ENCODE measurements at regions of chr10 and their contacts with region 1.

Region 1: GRCh38 chr10:63441404-63441803 is 24.4 kb downstream of the JMJD1C start:
- DNase-seq: no peak
- H3K4me3 ChIP-seq: no peak overlapping the region
- H3K27ac ChIP-seq: no peak overlapping the region
- H3K4me1 ChIP-seq: peaks cover 8% of the 10 kb centered on the region
- H3K27me3 ChIP-seq: no peaks in the 10 kb centered on the region
- CTCF ChIP-seq: no peak

Region 2: DNA sequence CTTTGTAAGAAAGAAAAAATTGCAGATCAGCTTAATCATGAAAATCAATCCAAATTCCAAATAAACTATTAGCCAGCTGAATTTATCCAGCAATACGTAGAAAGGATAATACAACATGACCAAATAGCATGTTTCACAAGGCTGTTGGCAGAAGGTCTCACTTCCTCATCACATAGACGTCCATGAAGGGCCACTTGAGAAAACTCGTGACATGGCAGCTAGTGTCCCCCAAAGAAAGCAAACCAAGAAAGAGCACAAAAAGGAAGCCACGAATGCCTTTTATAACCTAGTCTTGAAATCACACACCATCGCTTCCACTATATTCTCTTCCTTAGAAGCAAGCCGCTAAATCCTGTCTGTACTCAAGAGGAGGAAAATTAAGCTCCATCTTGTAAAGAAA is 413.9 kb before region 1 on chr10:
- CTCF ChIA-PET with region 1: no interaction called
- dilution Hi-C with region 1: no loop called
- in situ Hi-C with region 1: no loop called
- intact Hi-C with region 1: no loop called
- DNase-seq: no peak
- H3K4me3 ChIP-seq: no peak overlapping the region
- H3K27ac ChIP-seq: no peak overlapping the region
- H3K4me1 ChIP-seq: no peaks in the 10 kb centered on the region
- H3K27me3 ChIP-seq: no peaks in the 10 kb centered on the region
- CTCF ChIP-seq: no peak

Region 3: DNA sequence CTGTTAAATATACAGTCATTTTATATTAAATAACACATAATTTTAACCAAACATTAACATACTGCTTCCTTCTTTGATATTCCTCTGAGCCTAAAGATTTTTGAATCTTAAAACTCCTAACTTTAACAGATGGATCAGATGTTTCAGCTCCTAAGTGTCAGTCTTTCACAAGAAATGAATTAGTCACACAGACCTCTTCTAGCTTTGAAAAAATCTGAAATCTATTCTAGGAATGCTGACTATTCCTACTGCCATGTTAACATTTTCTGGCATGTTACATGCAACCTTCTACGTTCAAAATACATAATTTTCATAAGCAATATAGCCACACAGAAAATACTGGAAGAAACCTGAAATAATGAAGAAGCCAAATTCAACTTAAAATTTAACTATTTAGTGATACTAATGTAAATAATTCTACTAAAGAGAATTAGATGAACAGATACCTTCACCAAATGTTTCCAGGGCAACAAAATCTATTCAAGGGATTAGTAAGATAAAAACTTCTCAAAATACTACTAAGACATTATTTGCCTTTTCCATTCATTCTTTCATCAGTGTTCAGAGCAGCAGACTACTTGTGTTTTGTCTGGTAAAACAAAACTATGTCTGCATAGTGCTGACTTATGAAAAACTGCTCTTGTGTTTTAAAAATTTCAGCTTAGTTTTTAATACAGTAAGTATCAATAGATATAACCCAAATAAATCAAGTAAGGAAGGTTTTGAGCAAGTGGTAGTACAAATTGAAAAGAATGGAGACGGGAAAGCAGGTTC is 15.2 kb after region 1 on chr10:
- CTCF ChIA-PET with region 1: interaction called, 10 read pairs
- dilution Hi-C with region 1: no loop called
- in situ Hi-C with region 1: no loop called
- intact Hi-C with region 1: no loop called
- DNase-seq: peak; percentile 37
- H3K4me3 ChIP-seq: no peak overlapping the region
- H3K27ac ChIP-seq: peak overlapping the region; percentile 46
- H3K4me1 ChIP-seq: peaks cover 8% of the 10 kb centered on the region
- H3K27me3 ChIP-seq: no peaks in the 10 kb centered on the region
- CTCF ChIP-seq: no peak

Measured in mammary epithelial cell (primary cell).